Right ventricle myocardium superior (tissue), 1 donor: ENCODE measurements at regions of chr9 and their contacts with region 1.

Region 1: GRCh38 chr9:71819115-71819739 is 50.9 kb upstream of the CEMIP2 start:
- DNase-seq: no peak
- ATAC-seq: no peak

Region 2: GRCh38 chr9:71604197-71605063 is 214.8 kb before region 1 on chr9:
- intact Hi-C with region 1: loop called (anchors 5 kb)
- DNase-seq: peak; percentile 74
- ATAC-seq: peak; percentile 84

Region 3: GRCh38 chr9:71911253-71912074 is 92.2 kb after region 1 on chr9 and contains the start of gene C9orf85:
- intact Hi-C with region 1: loop called (anchors 10 kb)
- DNase-seq: peak; percentile 99
- ATAC-seq: peak; percentile 98
- total RNA-seq, gene C9orf85: 7.1 TPM